Heart right ventricle (tissue), 16 donors: ENCODE measurements at regions of chr7 and their contacts with region 1.

Region 1: DNA sequence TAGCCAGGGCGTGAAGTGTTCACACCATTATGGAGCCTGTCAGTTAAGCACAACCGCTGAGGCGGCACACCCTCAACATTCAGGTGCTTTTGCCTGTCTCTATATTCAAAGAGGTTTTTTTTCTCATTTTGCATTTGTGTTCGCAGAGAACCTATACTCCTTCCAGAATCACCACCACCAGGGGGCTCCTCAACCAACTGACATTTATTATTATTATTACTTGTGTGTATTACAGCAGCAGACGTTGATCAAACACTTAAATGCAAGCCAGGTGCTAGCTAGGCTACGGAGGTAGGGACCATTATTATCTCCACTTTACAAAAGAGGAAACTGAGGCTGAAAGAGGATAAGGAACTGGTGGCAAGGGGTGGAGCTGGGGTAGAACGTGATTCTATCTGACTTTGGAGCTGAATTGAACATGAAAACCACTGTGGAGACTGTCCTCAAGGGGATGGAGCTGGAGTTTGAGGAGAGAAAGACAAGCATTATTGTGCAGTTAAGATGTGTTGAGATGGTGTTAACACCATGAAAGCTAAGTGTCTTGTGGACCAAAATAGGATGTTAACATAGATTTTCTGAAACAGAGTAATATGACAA is 133.8 kb upstream of the PLXNA4 start:
- DNase-seq: peak in 1 of 2 donors; percentile 11
- ATAC-seq: no peak
- H3K4me3 ChIP-seq: no peak overlapping the region
- H3K27ac ChIP-seq: no peak overlapping the region
- H3K4me1 ChIP-seq: no peaks in the 10 kb centered on the region
- H3K27me3 ChIP-seq: no peaks in the 10 kb centered on the region
- CTCF ChIP-seq: peak in 8 of 9 donors; percentile 24 to 62 (median 54)

Region 2: DNA sequence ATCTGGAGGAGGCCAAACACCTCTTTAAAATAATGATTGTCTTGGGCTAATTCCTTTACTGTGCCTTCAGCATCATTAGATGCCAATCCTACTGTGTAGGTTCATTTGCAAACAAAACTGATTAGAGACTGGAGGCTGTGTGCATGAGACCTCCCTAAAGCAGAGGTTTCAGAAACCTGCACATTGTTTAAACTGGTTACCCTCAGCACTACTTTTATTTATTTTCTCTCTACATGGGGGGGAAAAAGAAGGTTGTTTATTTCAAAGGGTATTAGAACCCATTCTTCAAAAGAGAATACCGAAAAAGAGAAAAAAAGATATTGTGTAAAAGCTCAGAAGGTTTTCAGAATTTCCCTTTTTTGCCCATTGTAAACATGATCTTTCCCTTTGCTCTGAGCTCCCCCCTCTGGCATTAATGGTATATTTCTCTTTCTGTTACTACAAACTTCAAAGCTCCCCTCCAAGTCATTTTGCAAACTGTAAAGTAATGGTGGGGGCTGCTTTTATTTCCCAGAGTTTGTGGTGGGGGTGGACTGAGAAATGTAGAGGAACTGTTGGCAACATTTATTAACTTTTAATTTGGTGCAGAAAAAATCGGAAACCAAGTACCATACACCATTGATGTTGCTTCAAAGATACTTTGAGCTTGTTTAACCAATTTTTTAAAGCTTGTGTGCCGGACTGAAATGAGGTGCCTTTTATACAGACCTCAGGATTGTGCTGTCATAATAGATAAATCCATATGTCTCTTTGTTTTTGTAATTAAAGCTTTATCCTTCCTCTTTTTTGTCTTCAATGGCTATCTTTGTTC is 724.2 kb after region 1 on chr7:
- intact Hi-C with region 1: loop called in 2 of 10 experiments (anchors 10 kb)
- DNase-seq: no peak
- ATAC-seq: peak in 1 of 8 donors; percentile 35
- H3K4me3 ChIP-seq: no peak overlapping the region
- H3K27ac ChIP-seq: no peak overlapping the region
- H3K4me1 ChIP-seq: peaks cover 0 to 28% (median 19%) of the 10 kb centered on the region in 9 donors
- H3K27me3 ChIP-seq: no peaks in the 10 kb centered on the region
- CTCF ChIP-seq: peak in 8 of 9 donors; percentile 20 to 62 (median 52)